H1 (cell line): ENCODE measurements at regions of chr12 and their contacts with region 1.

Region 1: DNA sequence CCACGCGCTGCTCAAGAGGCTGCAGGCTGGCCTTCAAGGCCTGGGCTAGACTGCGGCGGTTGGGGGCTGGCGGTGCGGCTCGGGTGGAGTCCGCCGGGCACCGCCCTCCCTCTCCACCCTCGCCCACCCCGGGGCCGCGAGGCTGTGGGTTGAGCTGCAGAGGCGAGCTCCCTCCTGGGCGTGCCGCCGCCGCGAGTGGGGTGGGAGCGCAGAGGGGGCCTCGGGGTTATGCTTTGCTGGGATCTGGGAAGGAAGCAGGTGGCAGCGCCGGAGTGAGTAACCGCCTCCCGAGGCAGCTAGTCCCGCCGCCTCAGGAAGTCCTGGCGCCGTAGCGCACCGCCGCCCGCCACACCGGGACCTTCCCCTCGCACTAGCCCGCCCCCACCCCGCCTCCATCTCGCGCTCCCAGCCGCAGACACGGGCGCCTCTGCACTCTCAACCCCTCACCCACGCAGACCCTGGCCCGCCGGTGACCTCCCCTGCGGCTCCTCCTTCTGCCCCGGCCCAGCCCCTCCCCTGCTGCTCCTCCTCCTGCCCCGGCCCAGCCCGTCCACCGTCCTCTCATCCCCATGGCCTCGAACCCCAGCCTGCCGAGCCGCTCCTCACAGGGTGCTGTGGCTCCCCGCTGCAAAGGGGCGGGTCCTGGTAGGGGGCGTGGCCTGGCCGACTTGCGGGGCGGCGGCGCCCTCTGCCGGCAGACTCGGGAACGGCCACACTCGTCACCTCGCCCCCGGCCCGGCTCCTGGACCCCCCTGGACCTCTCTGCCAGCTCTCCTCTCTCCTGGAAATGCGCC is 16.6 kb downstream of the TAMALIN start:
- DNase-seq: peak; percentile 60 to 99
- H3K4me3 ChIP-seq: peak overlapping the region; percentile 23 to 71 (median 48)
- H3K27ac ChIP-seq: no peak overlapping the region
- H3K4me1 ChIP-seq: peaks cover 0 to 26% (median 7%) of the 10 kb centered on the region in 4 experiments; a peak in 5 of 7 replicates
- H3K27me3 ChIP-seq: peaks cover 2 to 27% (median 17%) of the 10 kb centered on the region in 4 experiments
- CTCF ChIP-seq: peak; percentile 89 to 95 (median 92)
- EP300 ChIP-seq: no peak; a peak in 1 of 3 replicates
- POLR2A ChIP-seq: no peak
- RAD21 ChIP-seq: peak; percentile 86 to 89

Region 2: DNA sequence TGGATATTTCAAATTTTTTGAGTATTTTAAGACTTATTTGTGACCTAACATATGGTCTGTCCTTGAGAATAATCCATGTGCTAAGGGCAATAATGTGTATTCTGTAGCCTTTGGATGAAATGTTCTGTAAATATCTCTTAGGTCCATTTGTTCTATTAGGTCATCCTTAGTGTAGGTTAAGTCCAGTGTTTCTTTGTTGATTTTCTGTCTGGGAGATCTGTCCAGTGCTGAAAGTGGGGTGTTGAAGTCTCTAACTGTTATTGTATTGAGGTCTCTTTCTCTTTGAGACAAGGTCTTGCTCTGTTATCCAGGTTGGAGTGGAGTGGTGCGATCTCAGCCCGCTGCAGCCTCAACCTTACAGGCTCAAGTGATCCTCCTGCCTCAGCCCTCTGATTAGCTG is 282.9 kb before region 1 on chr12:
- CTCF ChIA-PET with region 1: no interaction called
- POLR2A ChIA-PET with region 1: no interaction called
- DNase-seq: no peak
- H3K4me3 ChIP-seq: no peak overlapping the region
- H3K27ac ChIP-seq: no peak overlapping the region
- H3K4me1 ChIP-seq: no peaks in the 10 kb centered on the region
- H3K27me3 ChIP-seq: no peaks in the 10 kb centered on the region; a peak in 2 of 7 replicates
- CTCF ChIP-seq: no peak
- EP300 ChIP-seq: no peak
- POLR2A ChIP-seq: no peak
- RAD21 ChIP-seq: no peak

Region 3: DNA sequence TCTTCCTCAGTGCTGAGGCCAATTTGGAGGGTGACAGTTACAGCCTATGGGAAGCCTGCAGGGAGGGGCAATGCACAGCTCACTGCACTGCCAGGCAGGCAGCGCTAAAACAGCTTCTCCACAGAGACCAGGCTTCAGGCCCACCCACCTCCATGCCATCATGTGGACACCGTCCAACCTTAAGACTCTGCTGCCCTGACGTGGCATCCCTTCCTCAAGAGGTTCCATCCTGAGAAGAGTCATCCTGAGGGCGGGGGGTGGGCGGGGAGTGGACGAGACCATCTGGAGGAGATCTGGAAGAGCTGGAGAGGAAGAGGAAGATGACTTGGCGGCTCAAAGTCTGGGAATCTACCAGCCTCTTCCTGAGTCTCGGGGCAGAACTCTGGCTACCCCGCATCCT is 124.4 kb before region 1 on chr12:
- CTCF ChIA-PET with region 1: interaction called, 13 read pairs
- POLR2A ChIA-PET with region 1: no interaction called
- DNase-seq: no peak
- H3K4me3 ChIP-seq: no peak overlapping the region
- H3K27ac ChIP-seq: no peak overlapping the region
- H3K4me1 ChIP-seq: no peaks in the 10 kb centered on the region
- H3K27me3 ChIP-seq: no peaks in the 10 kb centered on the region
- CTCF ChIP-seq: no peak
- EP300 ChIP-seq: no peak
- POLR2A ChIP-seq: no peak
- RAD21 ChIP-seq: no peak

Region 4: DNA sequence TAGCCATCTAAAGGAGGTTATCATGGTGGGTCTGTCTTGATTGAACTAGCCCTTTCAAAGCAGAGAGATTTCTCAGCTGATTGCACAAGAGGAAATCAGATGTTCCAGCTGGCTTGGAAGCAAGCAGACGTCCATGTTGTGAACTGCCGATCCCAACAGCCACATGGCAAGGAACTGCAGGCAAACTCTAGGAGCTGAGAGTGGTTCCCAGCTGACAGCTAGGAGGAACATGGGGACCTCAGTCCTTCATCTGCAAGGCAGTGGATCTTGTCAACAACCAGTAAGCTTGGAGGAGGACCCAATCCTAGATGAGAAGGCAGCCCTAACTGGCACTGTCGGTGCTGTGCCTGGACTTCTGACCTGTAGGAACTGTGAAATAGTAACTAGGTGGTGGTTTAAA is 64.2 kb before region 1 on chr12:
- CTCF ChIA-PET with region 1: interaction called, 10 read pairs
- POLR2A ChIA-PET with region 1: interaction called, 4 read pairs
- DNase-seq: no peak
- H3K4me3 ChIP-seq: no peak overlapping the region
- H3K27ac ChIP-seq: no peak overlapping the region
- H3K4me1 ChIP-seq: no peaks in the 10 kb centered on the region
- H3K27me3 ChIP-seq: no peaks in the 10 kb centered on the region
- CTCF ChIP-seq: no peak
- EP300 ChIP-seq: no peak
- POLR2A ChIP-seq: no peak
- RAD21 ChIP-seq: no peak

Region 5: DNA sequence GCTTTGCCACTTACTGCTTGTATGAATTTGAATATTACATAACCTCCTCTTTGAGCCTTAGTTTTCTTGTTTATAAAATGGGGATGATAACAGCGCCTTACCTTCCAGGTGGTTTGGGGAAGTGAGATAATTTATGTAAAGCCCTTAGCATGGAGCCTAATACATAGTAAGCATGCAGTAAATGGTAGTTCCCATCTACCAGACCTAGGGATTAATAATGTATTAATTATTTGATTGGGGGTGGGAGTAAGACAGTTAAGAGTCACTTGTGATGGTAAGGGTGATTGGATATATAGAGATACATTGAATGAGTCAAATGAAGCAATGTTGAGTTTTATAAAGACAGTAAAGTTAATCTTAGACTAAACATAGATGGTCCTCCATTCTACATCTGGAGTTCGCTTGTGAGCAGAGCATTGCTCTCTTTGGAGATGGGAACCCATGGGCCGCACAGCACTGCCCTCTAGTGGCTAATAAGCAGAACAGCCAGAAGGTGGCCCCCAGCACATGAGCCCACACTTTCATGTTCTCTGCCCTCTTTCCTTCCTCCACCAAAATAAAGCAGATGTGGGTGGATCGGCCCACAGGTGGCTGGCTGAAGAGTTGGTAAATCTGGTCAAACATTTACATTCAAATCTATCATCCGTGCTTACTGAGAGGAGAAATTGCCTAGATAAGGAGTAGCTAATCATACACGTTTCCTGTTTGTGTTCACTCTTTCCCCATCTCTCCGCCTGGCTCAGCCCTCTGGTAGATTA is 43.1 kb before region 1 on chr12:
- CTCF ChIA-PET with region 1: interaction called, 1,249 read pairs
- POLR2A ChIA-PET with region 1: no interaction called
- DNase-seq: peak in 1 of 2 experiments; percentile 66
- H3K4me3 ChIP-seq: no peak overlapping the region
- H3K27ac ChIP-seq: no peak overlapping the region
- H3K4me1 ChIP-seq: peaks cover 0 to 1% (median 0%) of the 10 kb centered on the region in 4 experiments; a peak in 1 of 7 replicates
- H3K27me3 ChIP-seq: no peaks in the 10 kb centered on the region
- CTCF ChIP-seq: peak; percentile 94 to 97 (median 96)
- EP300 ChIP-seq: no peak
- POLR2A ChIP-seq: no peak
- RAD21 ChIP-seq: peak; percentile 83 to 88

Region 6: GRCh38 chr12:52004042-52004648 is 19.2 kb before region 1 on chr12:
- CTCF ChIA-PET with region 1: interaction called, 1,249 read pairs
- POLR2A ChIA-PET with region 1: interaction called, 62 read pairs
- DNase-seq: peak in 1 of 2 experiments; percentile 81
- H3K4me3 ChIP-seq: no peak overlapping the region
- H3K27ac ChIP-seq: no peak overlapping the region
- H3K4me1 ChIP-seq: peaks cover 0 to 16% (median 8%) of the 10 kb centered on the region in 4 experiments; a peak in 6 of 7 replicates
- H3K27me3 ChIP-seq: peaks cover 19 to 47% (median 44%) of the 10 kb centered on the region in 4 experiments
- CTCF ChIP-seq: peak in 2 of 3 experiments; percentile 83 to 93; a peak in 3 of 4 replicates
- EP300 ChIP-seq: no peak
- POLR2A ChIP-seq: no peak
- RAD21 ChIP-seq: peak; percentile 91 to 95

Region 7: GRCh38 chr12:52087961-52088820 is 64.8 kb after region 1 on chr12:
- CTCF ChIA-PET with region 1: interaction called, 1,022 read pairs
- POLR2A ChIA-PET with region 1: interaction called, 82 read pairs
- DNase-seq: no peak
- H3K4me3 ChIP-seq: no peak overlapping the region
- H3K27ac ChIP-seq: no peak overlapping the region
- H3K4me1 ChIP-seq: peaks cover 0 to 1% (median 0%) of the 10 kb centered on the region in 4 experiments; a peak in 2 of 7 replicates
- H3K27me3 ChIP-seq: no peaks in the 10 kb centered on the region
- CTCF ChIP-seq: no peak
- EP300 ChIP-seq: no peak
- POLR2A ChIP-seq: no peak
- RAD21 ChIP-seq: no peak